Right ventricle myocardium inferior (tissue), 1 donor: ENCODE measurements at regions of chr6 and their contacts with region 1.

Region 1: DNA sequence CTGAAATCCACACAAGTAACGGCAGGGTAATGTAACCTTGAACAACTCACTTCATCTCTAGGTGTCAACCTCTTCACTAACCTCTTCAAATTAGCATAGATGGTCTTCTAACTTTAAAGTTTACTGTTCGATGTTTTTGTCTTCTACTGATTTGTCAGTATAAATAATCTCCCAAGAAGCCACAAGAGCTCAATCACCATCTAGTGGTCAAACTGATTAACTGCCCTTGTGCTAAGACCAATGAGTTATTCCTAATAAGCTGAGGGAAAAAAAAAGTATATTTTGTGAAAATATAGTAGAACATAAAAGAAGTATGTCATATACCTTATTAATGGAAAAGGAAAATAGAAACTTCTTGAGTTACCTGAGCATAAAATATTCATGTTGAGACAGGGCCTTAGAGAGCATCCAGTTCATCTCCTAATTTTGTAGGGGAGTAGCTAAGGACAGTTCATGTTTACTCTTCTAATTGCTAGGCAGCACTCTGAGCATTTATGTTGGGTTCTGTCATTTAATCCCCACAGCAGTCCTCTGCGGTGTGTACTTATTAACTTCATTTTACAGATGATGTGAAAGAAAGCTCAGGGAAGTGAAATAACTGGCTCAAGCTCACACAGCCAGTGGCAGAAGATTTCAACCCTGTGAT is 317.1 kb downstream of the ESR1 start:
- DNase-seq: no peak
- ATAC-seq: peak; percentile 47

Region 2: GRCh38 chr6:151675746-151676416 is 448.7 kb before region 1 on chr6:
- intact Hi-C with region 1: loop called (anchors 10 kb)
- DNase-seq: no peak
- ATAC-seq: no peak

Region 3: GRCh38 chr6:151765444-151765886 is 359.1 kb before region 1 on chr6:
- intact Hi-C with region 1: loop called (anchors 2 kb)
- DNase-seq: no peak
- ATAC-seq: peak; percentile 38

Region 4: GRCh38 chr6:152094992-152095592 is 29.5 kb before region 1 on chr6:
- intact Hi-C with region 1: no loop called
- DNase-seq: peak; percentile 70
- ATAC-seq: peak; percentile 80

Region 5: DNA sequence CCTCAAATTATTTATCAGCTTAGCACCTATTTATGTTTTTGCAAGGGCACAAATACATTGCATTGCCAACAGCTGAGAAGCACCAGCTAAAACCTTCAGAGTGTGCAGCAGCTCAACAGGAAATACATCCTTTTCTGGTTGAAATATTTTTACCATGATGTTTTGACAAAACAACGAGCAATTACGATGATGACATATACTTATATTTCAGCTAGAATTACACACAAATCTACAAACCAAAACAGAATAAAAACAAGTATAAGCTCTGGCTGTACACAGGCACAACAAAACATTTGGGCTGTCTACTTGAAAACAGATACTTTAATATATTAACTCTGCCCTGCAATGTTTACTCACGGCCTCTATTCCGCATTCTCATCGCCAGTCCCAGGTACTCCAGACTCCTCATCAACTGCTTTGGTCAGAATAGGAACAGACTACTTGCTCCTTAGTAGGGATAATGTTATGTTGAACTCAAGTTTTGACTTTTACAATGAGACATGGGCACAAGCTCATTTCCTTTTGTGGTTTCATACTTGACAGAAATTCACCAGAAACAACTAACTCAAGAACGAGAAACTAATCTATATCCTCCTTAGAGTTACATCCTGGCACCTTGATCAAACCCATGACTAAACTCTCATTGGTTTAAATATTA is 60.5 kb after region 1 on chr6:
- intact Hi-C with region 1: no loop called
- DNase-seq: no peak
- ATAC-seq: no peak

Region 6: GRCh38 chr6:152540381-152540780 is 415.8 kb after region 1 on chr6:
- intact Hi-C with region 1: no loop called
- DNase-seq: no peak
- ATAC-seq: no peak